Breast epithelium (tissue), 4 donors: ENCODE measurements at regions of chr9 and their contacts with region 1.

Region 1: DNA sequence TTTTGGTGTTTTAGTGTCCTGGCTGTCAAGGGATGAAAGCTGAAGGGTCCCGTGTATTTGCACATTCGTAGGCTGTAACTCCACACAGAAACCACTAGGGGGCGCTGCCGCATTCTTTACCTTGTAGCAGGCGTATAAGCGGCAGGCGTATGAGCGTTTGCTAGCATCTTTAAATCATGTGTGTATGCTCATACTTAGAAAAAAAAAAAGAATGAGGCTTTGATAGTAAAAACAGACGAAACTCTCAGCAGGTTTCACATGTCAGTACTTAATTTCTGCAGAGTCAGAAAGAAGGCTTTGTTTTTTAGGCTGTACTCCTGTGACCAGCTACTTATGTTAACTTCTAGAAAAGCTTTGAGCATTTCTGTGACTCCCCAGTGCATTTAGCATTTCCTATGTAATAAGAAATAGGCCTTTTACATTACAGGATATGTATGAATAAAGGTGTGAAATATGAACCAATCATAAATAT is 218.8 kb upstream of the ADAMTSL1 start:
- DNase-seq: peak; percentile 49 to 80
- H3K4me3 ChIP-seq: no peak overlapping the region
- H3K27ac ChIP-seq: no peak overlapping the region
- H3K4me1 ChIP-seq: no peaks in the 10 kb centered on the region
- H3K27me3 ChIP-seq: no peaks in the 10 kb centered on the region
- CTCF ChIP-seq: peak; percentile 87 to 94 (median 88)
- POLR2A ChIP-seq: no peak

Region 2: DNA sequence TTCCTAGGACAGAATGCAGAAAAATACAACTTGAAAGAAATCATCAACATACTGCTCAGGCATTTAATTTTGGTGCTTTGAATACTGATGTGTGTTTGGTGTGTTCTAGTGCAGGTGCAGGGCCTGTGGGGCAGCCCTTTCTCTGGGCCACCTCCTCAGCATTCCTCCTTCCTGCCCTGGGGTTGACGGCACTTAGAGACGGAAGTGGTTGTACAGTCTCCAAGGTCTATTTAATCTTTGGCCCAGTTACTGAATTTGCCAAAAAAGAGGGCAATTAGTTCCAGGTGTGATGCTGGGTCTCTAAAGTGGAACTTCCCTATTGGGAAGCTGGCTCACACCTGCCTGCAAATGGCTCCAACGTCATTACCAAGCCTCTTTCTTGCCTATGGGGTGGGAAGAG is 407.3 kb before region 1 on chr9:
- intact Hi-C with region 1: no loop called
- DNase-seq: no peak
- H3K4me3 ChIP-seq: no peak overlapping the region
- H3K27ac ChIP-seq: no peak overlapping the region
- H3K4me1 ChIP-seq: no peaks in the 10 kb centered on the region
- H3K27me3 ChIP-seq: no peaks in the 10 kb centered on the region
- CTCF ChIP-seq: no peak
- POLR2A ChIP-seq: no peak

Region 3: DNA sequence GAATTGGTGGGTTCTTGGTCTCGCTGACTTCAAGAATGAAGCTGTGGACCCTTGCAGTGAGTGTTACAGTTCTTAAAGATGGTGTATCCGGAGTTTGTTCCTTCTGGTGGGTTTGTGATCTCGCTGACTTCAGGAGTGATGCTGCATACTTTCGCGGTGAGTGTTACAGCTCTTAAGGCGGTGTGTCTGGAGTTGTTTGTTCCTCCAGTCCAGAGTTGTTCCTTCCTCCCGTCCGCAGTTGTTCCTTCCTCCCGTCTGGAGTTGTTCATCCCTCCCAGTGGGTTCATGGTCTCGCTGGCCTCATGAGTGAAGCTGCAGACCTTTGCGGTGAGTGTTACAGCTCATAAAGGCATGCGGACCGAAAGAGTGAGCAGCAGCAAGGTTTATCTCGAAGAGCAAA is 59.1 kb after region 1 on chr9:
- intact Hi-C with region 1: no loop called
- DNase-seq: no peak
- H3K4me3 ChIP-seq: no peak overlapping the region
- H3K27ac ChIP-seq: no peak overlapping the region
- H3K4me1 ChIP-seq: no peaks in the 10 kb centered on the region
- H3K27me3 ChIP-seq: no peaks in the 10 kb centered on the region
- CTCF ChIP-seq: no peak
- POLR2A ChIP-seq: no peak

Region 4: GRCh38 chr9:18437315-18438201 is 182.4 kb after region 1 on chr9:
- intact Hi-C with region 1: loop called (anchors 2 kb)
- DNase-seq: no peak
- H3K4me3 ChIP-seq: peak overlapping the region; percentile 38 to 64 (median 53)
- H3K27ac ChIP-seq: peak overlapping the region; percentile 7 to 34
- H3K4me1 ChIP-seq: no peaks in the 10 kb centered on the region
- H3K27me3 ChIP-seq: no peaks in the 10 kb centered on the region
- CTCF ChIP-seq: no peak
- POLR2A ChIP-seq: no peak

Region 5: GRCh38 chr9:19028835-19029451 is 773.7 kb after region 1 on chr9:
- intact Hi-C with region 1: loop called (anchors 10 kb)
- DNase-seq: no peak
- H3K4me3 ChIP-seq: no peak overlapping the region
- H3K27ac ChIP-seq: no peak overlapping the region
- H3K4me1 ChIP-seq: no peaks in the 10 kb centered on the region
- H3K27me3 ChIP-seq: no peaks in the 10 kb centered on the region
- CTCF ChIP-seq: peak; percentile 46 to 73 (median 70)
- POLR2A ChIP-seq: no peak